ENCODE measurements at regions of chr22 and their contacts with region 1.

Region 1: DNA sequence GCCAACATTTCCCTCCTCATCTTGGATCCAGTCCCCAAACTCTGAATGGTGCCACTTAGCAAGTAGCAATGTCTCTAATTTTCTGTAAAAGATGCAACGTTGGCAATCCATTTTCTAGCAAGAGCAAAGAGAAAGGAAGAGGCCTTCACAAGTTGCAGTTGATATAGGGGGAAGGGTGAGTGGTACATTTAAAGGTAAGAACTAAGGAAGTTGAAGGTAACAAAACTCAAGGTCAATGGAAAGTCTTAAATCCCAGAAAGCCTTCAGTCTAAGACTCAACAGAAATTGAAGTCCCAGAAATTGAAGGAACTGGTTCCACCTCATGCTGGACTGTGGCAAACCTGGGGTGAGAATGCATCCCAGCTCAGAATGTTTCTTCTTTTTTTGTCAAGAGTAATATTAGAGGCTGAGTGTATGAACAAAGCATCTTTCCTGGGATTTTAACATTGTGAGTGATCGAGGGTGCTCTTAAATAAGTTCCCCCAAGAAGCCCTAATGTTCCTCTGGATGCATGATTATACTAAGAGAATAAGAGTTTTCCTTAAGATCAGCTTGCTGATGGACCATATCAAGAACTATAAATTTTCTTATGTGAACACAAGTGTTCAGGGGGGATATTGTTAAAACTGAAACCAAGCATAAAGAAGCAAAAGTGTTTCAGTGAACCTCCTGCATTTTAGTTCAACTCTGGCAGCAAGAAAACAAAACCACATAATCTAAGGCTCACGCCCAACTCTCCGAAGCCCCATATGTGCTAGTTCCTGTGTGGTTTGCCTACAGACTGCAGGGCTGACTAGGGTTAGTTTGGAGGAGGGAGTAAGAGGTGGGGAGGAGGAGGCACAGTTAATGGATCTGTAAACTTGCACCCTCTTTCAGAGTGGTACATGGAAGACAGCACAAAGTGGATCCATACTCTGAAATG is at the start of gene GRAP2:
- DNase-seq: peak; percentile 82
- H3K4me3 Mint-ChIP-seq: peak within 1 kb of the TSS; percentile 90
- H3K27ac Mint-ChIP-seq: peak within 1 kb of the TSS; percentile 100
- H3K4me1 Mint-ChIP-seq: peaks cover 18% of the 10 kb centered on the region
- H3K27me3 Mint-ChIP-seq: no peaks in the 10 kb centered on the region
- total RNA-seq, gene GRAP2: 25.5 to 29.4 TPM

Region 2: DNA sequence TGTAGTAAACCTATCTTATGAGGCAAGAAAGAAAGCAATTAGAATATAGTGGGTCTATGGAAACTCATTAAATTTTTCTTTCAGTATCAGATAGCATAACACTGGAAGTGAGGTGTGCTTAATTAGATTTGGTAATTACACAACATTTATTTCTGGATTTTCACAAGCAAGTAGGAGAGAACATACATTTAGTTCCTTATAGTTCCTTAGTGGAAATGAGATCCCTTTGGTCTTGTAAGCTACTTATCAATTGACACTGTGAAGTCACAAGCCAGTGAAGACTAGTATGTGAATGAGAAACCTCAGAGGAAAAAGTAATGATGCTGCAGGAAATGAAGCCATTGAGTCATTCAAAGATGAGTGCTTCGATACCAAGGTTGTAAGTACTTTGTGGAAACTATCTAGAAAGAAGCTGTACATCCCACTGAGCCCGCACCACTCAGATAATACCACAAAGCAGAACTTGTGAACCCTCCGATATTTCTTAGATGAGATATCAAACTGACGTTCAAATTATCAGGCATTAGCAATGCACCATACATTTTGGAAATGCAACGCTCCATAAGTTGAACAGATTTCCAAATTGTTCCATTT is 60.6 kb before region 1 on chr22:
- CTCF ChIA-PET with region 1: no interaction called
- intact Hi-C with region 1: loop called (anchors 2 kb)
- DNase-seq: peak; percentile 63
- H3K4me3 Mint-ChIP-seq: no peak overlapping the region
- H3K27ac Mint-ChIP-seq: no peak overlapping the region
- H3K4me1 Mint-ChIP-seq: peaks cover 13% of the 10 kb centered on the region
- H3K27me3 Mint-ChIP-seq: no peaks in the 10 kb centered on the region

Region 3: DNA sequence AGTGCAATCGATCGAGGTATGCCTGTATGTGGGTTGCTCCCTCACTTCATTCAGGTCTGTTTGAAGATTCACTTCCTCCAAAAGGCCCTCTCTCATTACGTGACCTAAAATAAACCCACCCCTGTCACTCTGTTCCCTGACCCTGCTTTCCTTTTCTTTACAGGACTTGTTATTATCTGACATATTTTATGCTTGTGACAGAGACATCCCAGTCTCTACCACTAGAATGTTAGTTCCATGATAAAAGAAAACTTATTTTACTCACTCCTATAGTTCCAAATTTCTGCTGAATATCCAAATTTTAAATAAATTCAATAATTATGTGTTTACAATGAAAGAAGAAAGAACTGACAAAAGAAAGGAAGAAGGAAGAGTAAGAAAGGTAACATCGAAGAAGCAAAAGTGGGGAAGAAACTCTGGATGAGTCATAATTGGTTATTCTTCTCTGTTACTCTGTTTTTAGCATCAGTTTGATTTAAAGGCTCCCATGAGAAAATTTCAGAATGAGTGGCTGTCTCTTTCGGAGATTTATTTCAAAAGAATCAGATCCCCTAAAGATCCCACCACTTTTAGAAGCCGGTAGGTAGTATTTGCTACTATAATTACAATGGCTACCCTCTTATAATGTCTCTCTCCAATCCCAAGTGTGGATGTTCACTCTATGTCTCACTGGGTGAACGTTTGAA is 40.5 kb before region 1 on chr22:
- CTCF ChIA-PET with region 1: no interaction called
- intact Hi-C with region 1: loop called (anchors 2 kb)
- DNase-seq: no peak
- H3K4me3 Mint-ChIP-seq: peak overlapping the region; percentile 46
- H3K27ac Mint-ChIP-seq: peak overlapping the region; percentile 16
- H3K4me1 Mint-ChIP-seq: peaks cover 23% of the 10 kb centered on the region
- H3K27me3 Mint-ChIP-seq: no peaks in the 10 kb centered on the region

Region 4: DNA sequence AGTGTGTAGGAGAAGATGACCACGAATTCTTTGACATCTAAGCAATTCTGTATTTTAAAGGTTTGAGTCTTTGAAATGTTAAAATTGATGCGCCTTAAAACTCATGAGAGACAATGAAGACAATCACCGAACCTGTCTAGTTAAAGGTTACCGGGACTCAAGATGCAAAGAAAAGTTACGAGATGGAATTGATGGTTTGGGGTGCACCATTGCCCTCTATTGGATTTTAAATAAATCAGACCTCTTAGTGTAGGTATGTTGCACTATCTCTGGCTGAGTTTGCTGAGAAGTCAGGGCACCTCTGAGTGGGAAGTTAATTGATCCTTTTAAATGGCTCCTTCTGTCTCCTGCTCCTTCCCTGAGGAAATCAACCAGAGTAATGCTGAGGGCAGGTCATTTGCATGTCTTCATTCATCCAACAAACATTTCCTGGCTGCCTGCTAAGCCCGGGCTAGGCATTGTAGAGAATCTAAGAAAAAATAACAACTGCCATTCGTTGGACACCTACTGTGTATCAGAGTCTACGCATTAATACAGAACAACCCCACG is 40.3 kb after region 1 on chr22:
- CTCF ChIA-PET with region 1: no interaction called
- intact Hi-C with region 1: loop called (anchors 5 kb)
- DNase-seq: no peak
- H3K4me3 Mint-ChIP-seq: peak overlapping the region; percentile 33
- H3K27ac Mint-ChIP-seq: peak overlapping the region; percentile 95
- H3K4me1 Mint-ChIP-seq: peaks cover 93% of the 10 kb centered on the region
- H3K27me3 Mint-ChIP-seq: no peaks in the 10 kb centered on the region

Region 5: GRCh38 chr22:40009292-40009769 is 108.8 kb after region 1 on chr22:
- CTCF ChIA-PET with region 1: no interaction called
- intact Hi-C with region 1: loop called (anchors 10 kb)
- DNase-seq: no peak
- H3K4me3 Mint-ChIP-seq: peak overlapping the region; percentile 64
- H3K27ac Mint-ChIP-seq: peak overlapping the region; percentile 54
- H3K4me1 Mint-ChIP-seq: peaks cover 16% of the 10 kb centered on the region
- H3K27me3 Mint-ChIP-seq: no peaks in the 10 kb centered on the region

Region 6: GRCh38 chr22:40224702-40225101 is 324.1 kb after region 1 on chr22:
- CTCF ChIA-PET with region 1: no interaction called
- intact Hi-C with region 1: no loop called
- DNase-seq: peak; percentile 79
- H3K4me3 Mint-ChIP-seq: peak overlapping the region; percentile 61
- H3K27ac Mint-ChIP-seq: peak overlapping the region; percentile 83
- H3K4me1 Mint-ChIP-seq: peaks cover 57% of the 10 kb centered on the region
- H3K27me3 Mint-ChIP-seq: no peaks in the 10 kb centered on the region

Measured in activated naive CD4-positive, alpha-beta T cell treated with anti-CD3 and anti-CD28 coated beads for 36 hours (primary cell).